ENCODE measurements at regions of chr6 and their contacts with region 1.

Region 1: DNA sequence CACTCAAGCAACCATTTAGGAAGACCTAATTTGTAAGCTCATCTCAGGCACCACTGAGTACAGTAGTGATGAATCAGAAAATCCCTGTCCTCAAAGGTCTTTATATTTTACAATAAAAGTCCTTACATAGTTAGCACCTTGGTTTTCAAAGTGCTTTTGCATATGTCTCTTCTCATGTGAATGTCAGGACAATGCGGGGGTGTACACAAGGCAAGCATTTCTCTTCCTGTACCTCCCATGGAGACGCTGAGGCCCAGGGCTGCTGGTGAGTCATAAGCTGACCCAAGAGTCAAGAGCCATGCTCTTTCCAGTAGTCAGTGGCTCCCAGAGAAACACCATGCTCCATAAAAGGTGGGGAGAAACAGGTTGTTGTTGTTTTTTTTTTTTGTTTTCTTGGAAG is 174.0 kb downstream of the GJA10 start:
- DNase-seq: peak in 1 of 14 experiments; percentile 32
- ATAC-seq: no peak
- H3K4me3 ChIP-seq: no peak overlapping the region
- H3K4me3 Mint-ChIP-seq: no peak overlapping the region
- H3K27ac ChIP-seq: no peak overlapping the region
- H3K27ac Mint-ChIP-seq: no peak overlapping the region
- H3K4me1 ChIP-seq: peaks cover 26% of the 10 kb centered on the region
- H3K4me1 Mint-ChIP-seq: peaks cover 75% of the 10 kb centered on the region
- H3K27me3 ChIP-seq: no peaks in the 10 kb centered on the region
- H3K27me3 Mint-ChIP-seq: no peaks in the 10 kb centered on the region
- CTCF ChIP-seq: no peak

Region 2: GRCh38 chr6:90025523-90026061 is 42.7 kb before region 1 on chr6:
- CTCF ChIA-PET with region 1: no interaction called
- POLR2A ChIA-PET with region 1: no interaction called
- intact Hi-C with region 1: loop called (anchors 5 to 10 kb)
- DNase-seq: peak in 1 of 14 experiments; percentile 23
- ATAC-seq: peak; percentile 69
- H3K4me3 ChIP-seq: no peak overlapping the region
- H3K4me3 Mint-ChIP-seq: no peak overlapping the region
- H3K27ac ChIP-seq: no peak overlapping the region
- H3K27ac Mint-ChIP-seq: peak overlapping the region; percentile 45
- H3K4me1 ChIP-seq: peaks cover 20% of the 10 kb centered on the region
- H3K4me1 Mint-ChIP-seq: peaks cover 85% of the 10 kb centered on the region
- H3K27me3 ChIP-seq: no peaks in the 10 kb centered on the region
- H3K27me3 Mint-ChIP-seq: no peaks in the 10 kb centered on the region
- CTCF ChIP-seq: no peak

Measured in CD4-positive, alpha-beta T cell (primary cell).